B cell (primary cell): ENCODE measurements at regions of chr12 and their contacts with region 1.

Region 1: DNA sequence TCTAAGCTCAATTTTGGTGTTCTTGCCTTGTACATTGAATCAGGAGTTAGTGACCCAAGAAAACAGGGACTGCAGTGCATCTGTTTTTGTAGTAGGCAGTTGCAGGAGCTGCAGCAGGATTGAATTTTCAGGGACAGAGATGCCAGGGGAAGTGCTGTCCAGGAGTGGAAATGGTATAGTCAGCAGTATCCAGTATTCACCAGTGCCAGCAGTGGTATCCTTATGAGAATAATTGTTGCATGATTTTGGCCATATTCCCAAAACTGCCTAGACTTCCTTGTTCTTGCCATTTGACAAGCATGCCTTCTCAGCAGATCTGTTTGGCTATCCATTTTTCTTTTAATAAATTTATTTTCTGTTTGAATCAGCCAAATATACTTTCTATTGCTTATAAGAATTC is 18.6 kb upstream of the ABCD2 start:
- DNase-seq: no peak
- ATAC-seq: no peak
- H3K4me3 ChIP-seq: no peak overlapping the region
- H3K4me3 Mint-ChIP-seq: no peak overlapping the region
- H3K27ac ChIP-seq: no peak overlapping the region
- H3K27ac Mint-ChIP-seq: no peak overlapping the region
- H3K4me1 ChIP-seq: no peaks in the 10 kb centered on the region
- H3K4me1 Mint-ChIP-seq: no peaks in the 10 kb centered on the region
- H3K27me3 ChIP-seq: no peaks in the 10 kb centered on the region
- H3K27me3 Mint-ChIP-seq: peaks cover 15% of the 10 kb centered on the region
- CTCF ChIP-seq: no peak

Region 2: GRCh38 chr12:39595923-39596322 is 42.3 kb before region 1 on chr12:
- CTCF ChIA-PET with region 1: no interaction called
- POLR2A ChIA-PET with region 1: no interaction called
- intact Hi-C with region 1: loop called (anchors 5 kb)
- DNase-seq: no peak
- ATAC-seq: no peak
- H3K4me3 ChIP-seq: no peak overlapping the region
- H3K4me3 Mint-ChIP-seq: no peak overlapping the region
- H3K27ac ChIP-seq: no peak overlapping the region
- H3K27ac Mint-ChIP-seq: no peak overlapping the region
- H3K4me1 ChIP-seq: no peaks in the 10 kb centered on the region
- H3K4me1 Mint-ChIP-seq: no peaks in the 10 kb centered on the region
- H3K27me3 ChIP-seq: no peaks in the 10 kb centered on the region
- H3K27me3 Mint-ChIP-seq: no peaks in the 10 kb centered on the region
- CTCF ChIP-seq: no peak